Cardiac septum (tissue), 1 donor: ENCODE measurements at regions of chr16 and their contacts with region 1.

Region 1: GRCh38 chr16:69339289-69340108 is at the starts of genes COG8 and NIP7:
- DNase-seq: peak; percentile 96
- total RNA-seq, gene COG8: 21.6 TPM
- total RNA-seq, gene NIP7: 10.6 TPM

Region 2: GRCh38 chr16:69217433-69217832 is 122.1 kb before region 1 on chr16:
- intact Hi-C with region 1: no loop called
- DNase-seq: no peak

Region 3: DNA sequence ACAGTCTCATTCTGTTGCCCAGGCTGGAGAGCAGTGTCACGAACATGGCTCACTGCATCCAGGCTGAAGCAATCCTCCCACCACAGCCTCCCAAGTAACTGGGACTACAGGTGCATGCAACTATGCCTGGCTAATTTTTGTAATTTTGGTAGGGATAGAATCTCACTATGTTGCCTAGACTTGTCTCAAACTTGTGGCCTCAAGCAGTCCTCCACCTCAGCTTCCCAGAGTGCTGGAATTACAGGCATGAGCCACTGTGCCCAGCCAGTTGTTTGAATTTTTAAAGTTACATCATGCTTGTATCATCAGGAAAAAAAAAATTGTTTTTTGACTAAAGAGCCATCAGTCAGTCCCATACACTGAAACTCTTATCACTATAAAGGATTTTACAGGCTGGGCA is 45.4 kb before region 1 on chr16:
- intact Hi-C with region 1: no loop called
- DNase-seq: no peak

Region 4: DNA sequence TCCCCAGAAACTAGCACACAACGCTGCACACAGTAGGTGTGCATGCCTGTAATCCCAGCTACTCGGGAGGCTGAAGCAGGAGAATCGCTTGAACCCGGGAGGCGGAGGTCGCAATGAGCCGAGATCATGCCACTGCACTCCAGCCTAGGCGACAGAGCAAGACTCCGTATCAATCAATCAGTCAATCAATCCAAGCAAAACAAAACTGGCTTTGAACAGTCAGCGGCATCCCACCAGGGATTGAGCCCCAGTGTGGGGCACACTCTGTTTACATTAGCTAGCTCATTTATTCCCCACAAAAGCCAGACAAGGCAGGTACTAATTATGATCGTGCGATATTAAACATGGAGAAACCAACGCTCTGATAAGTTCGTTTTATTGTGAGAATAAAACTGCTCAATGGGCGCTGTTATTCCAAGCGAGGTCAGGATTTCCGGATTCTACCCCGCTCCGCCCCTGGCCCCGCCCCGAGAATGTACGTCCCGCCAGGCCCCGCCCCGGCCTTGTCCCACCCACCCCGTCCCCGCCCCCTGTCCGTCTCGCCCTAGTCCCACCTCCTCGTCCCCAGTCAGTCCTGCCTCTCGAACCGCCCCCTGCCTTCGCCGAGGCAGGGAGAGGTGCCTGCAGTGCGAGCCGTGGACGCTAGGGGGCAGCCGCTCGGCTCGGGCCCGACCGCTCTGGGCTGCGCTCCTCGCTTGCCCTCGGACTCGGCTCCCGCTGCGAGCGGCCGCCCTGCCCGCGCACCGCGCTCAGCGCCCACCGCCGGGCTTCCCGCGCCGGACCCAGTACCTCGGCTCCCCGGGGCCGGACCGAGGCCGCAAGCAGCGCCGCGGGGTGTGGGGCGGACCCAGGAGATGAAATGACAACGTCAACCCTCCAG is 28.6 kb before region 1 on chr16 and contains the start of gene VPS4A:
- intact Hi-C with region 1: loop called (anchors 2 kb)
- DNase-seq: peak; percentile 99
- total RNA-seq, gene VPS4A: 27.1 TPM

Region 5: GRCh38 chr16:69386596-69386995 is 47.1 kb after region 1 on chr16:
- intact Hi-C with region 1: loop called (anchors 5 kb)
- DNase-seq: no peak

Region 6: DNA sequence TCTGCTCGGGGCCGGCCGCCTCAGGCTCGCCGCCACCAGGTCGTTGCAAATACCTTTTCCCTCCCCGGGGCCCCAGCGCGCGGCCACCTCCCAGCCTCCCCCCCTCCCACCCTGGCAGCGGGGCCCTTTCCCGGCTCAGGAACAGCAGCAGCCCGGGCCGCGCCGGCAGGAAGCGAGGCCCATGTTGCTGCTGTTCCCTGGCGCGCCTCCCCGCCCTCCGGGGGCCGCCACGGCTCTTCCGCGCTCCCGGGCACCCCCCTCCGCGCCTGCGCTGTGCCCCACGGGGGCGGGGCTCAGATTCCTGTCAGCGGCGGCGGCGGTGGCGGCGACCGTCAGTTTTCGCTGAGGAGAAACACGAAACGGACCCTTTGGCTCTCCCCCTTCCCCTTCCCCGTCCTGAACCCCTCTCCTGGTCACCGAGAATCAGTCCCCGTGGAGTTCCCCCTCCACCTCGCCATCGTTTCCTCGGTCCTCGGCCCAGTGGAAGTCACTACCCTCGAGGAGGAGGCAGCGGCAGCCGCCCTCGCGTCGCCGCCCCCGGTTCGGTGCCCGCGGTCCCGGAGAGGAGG is 226.3 kb after region 1 on chr16 and contains the start of gene NFAT5:
- intact Hi-C with region 1: no loop called
- DNase-seq: peak; percentile 95
- total RNA-seq, gene NFAT5: 28.5 TPM